Esophagus muscularis mucosa (tissue), 4 donors: ENCODE measurements at regions of chr12 and their contacts with region 1.

Region 1: GRCh38 chr12:49515266-49515665 is 23.6 kb upstream of the KCNH3 start:
- DNase-seq: peak; percentile 12
- H3K4me3 ChIP-seq: no peak overlapping the region
- H3K27ac ChIP-seq: no peak overlapping the region
- H3K4me1 ChIP-seq: peaks cover 0 to 5% (median 0%) of the 10 kb centered on the region in 4 donors
- H3K27me3 ChIP-seq: no peaks in the 10 kb centered on the region
- CTCF ChIP-seq: no peak
- EP300 ChIP-seq: no peak
- POLR2A ChIP-seq: no peak

Region 2: DNA sequence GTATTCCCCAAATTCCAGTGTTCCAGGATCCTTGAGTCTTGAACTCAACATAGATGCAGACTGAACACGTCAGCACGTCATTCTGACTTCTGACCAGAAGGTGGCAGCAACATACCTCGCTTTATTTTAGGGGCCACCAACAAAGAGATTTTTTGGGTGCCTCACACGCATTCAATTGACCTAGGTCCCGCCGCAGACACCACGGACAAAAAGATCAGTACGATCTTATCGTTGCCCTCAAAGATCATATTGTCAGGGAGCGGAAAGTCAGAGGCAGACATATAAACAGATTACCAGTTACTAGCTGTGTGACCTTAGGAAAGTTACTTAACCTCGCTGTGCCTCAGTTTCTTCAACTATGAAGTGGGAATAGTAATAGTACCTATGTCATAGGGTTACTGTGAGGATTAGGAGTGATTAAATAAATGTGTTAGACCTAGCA is 226.8 kb before region 1 on chr12:
- intact Hi-C with region 1: loop called (anchors 10 kb)
- DNase-seq: no peak
- H3K4me3 ChIP-seq: no peak overlapping the region
- H3K27ac ChIP-seq: no peak overlapping the region
- H3K4me1 ChIP-seq: peaks cover 8 to 11% (median 10%) of the 10 kb centered on the region in 4 donors
- H3K27me3 ChIP-seq: peaks cover 0 to 59% (median 0%) of the 10 kb centered on the region in 4 donors
- CTCF ChIP-seq: peak; percentile 83 to 88 (median 85)
- EP300 ChIP-seq: no peak
- POLR2A ChIP-seq: no peak

Region 3: GRCh38 chr12:49358483-49359141 is 156.7 kb before region 1 on chr12:
- intact Hi-C with region 1: loop called (anchors 2 kb)
- DNase-seq: peak; percentile 37
- H3K4me3 ChIP-seq: no peak overlapping the region
- H3K27ac ChIP-seq: no peak overlapping the region
- H3K4me1 ChIP-seq: peaks cover 0 to 7% (median 4%) of the 10 kb centered on the region in 4 donors
- H3K27me3 ChIP-seq: peaks cover 0 to 31% (median 2%) of the 10 kb centered on the region in 4 donors
- CTCF ChIP-seq: peak; percentile 71 to 83 (median 82)
- EP300 ChIP-seq: no peak
- POLR2A ChIP-seq: no peak

Region 4: DNA sequence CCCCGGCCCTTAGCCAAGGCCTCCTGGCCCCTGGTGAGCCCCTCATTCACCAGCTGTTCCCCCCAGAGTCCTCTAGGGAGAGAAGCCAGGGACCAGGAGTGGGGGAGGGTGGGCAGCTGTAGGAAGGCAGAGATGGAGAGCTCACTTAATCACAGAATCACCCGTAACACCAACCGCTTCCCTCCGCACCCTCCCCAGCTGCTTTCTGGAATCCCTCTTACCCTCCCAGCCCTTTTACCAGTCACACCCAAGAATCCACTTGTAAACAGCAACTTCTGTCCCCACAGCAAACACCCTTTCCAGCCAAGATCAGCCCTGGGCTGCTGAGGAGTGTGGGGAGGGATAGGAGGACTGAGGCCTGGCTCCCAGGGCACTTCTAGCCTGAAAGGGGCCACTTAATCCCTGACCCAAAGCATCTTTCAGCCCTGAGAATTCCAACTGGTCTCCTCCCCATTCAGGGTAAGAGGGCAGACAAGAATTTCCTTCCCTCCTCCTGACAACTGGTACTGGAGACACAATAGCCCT is 294.2 kb after region 1 on chr12:
- intact Hi-C with region 1: no loop called
- DNase-seq: no peak
- H3K4me3 ChIP-seq: peak overlapping the region; percentile 5 to 31 (median 18)
- H3K27ac ChIP-seq: peak overlapping the region; percentile 68 to 85 (median 78)
- H3K4me1 ChIP-seq: peaks cover 29 to 51% (median 46%) of the 10 kb centered on the region in 4 donors
- H3K27me3 ChIP-seq: no peaks in the 10 kb centered on the region
- CTCF ChIP-seq: no peak
- EP300 ChIP-seq: no peak
- POLR2A ChIP-seq: no peak